ENCODE measurements at regions of chr2 and their contacts with region 1.

Region 1: DNA sequence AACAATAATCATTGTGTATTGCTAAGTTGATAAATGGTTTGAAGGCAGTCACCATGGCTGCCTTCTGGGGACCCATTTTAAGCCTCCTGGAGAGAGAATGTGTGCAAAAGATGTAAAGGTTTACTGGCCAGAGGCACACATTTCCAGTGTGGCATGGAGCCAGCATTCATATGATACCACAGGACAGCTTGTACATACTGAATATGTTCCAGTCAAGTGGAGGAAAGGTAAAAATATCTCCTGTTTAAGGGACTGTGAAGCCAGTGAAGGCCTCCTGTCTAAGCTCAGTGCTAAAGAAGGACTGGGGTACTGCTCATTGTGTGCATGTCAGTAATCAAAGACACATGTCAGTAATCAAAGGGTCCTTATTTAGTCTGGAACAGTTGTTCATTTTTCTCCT is 119.2 kb downstream of the BABAM2 start:
- DNase-seq: no peak
- H3K4me3 ChIP-seq: no peak overlapping the region
- H3K27ac ChIP-seq: no peak overlapping the region
- H3K4me1 ChIP-seq: no peaks in the 10 kb centered on the region
- H3K27me3 ChIP-seq: no peaks in the 10 kb centered on the region
- CTCF ChIP-seq: no peak
- POLR2A ChIP-seq: no peak

Region 2: DNA sequence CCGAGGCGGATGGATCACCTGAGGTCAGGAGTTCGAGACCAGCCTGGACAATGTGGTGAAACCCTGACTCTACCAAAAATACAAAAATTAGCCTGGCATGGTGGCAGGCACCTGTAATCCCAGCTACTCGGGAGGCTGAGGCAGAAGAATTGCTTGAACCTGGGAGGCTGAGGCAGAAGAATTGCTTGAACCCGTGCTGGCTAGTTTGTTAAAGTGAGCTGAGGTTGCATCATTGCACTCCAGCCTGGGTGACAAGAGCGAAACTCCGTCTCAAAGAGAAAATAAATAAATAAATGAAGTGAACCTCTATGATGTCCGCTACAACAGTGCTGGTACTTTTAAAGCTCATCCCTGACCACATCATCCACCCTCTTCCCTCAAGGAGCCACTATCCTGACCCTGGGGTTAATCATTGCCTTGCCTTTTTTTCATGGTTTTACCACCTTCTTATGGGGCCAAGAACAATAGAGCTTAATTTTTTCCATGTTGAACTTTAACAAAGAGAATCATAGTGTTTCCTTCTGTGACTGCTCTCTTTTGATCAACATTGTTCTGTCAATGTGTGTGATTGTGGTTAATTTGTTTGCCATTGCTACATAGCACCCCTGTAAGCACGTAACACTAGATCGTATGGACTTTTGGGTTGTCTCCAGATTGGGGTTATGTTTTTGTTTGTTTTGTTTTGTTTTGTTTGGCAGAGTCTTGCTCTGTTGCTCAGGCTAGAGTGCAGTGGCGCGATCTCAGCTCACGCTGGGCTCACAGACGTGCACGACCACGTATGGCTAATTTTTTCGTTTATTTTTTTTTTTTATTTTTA is 815.0 kb before region 1 on chr2:
- intact Hi-C with region 1: no loop called
- DNase-seq: no peak
- H3K4me3 ChIP-seq: no peak overlapping the region
- H3K27ac ChIP-seq: no peak overlapping the region
- H3K4me1 ChIP-seq: no peaks in the 10 kb centered on the region
- H3K27me3 ChIP-seq: no peaks in the 10 kb centered on the region
- CTCF ChIP-seq: no peak
- POLR2A ChIP-seq: no peak

Region 3: DNA sequence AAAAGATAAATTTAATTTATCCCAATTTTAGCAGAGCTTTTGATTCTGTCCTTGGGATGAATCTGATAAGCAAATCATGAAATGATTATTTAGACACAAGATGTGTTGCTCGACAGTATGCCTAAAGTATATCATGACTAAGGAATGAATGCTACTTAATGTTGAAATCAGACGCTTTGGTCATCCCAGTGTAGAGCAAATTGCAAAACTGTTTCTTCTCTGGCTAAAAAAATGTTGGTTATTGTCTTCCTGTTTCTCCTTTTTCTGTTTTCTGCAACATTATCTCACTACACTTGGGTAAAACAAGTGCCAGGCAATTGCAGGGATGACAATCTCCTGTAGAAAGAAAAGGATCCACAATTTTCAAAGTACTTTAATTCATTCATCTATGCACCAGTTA is 52.8 kb before region 1 on chr2:
- intact Hi-C with region 1: loop called (anchors 2 kb)
- DNase-seq: no peak
- H3K4me3 ChIP-seq: no peak overlapping the region
- H3K27ac ChIP-seq: no peak overlapping the region
- H3K4me1 ChIP-seq: peaks cover 7 to 29% of the 10 kb centered on the region in 2 donors
- H3K27me3 ChIP-seq: no peaks in the 10 kb centered on the region
- CTCF ChIP-seq: no peak
- POLR2A ChIP-seq: no peak

Region 4: GRCh38 chr2:27967076-27967475 is 42.7 kb before region 1 on chr2:
- intact Hi-C with region 1: no loop called
- DNase-seq: no peak
- H3K4me3 ChIP-seq: no peak overlapping the region
- H3K27ac ChIP-seq: no peak overlapping the region
- H3K4me1 ChIP-seq: no peaks in the 10 kb centered on the region
- H3K27me3 ChIP-seq: no peaks in the 10 kb centered on the region
- CTCF ChIP-seq: no peak
- POLR2A ChIP-seq: no peak

Region 5: GRCh38 chr2:28181801-28182200 is 172.1 kb after region 1 on chr2:
- intact Hi-C with region 1: loop called (anchors 5 kb)
- DNase-seq: no peak
- H3K4me3 ChIP-seq: no peak overlapping the region
- H3K27ac ChIP-seq: no peak overlapping the region
- H3K4me1 ChIP-seq: no peaks in the 10 kb centered on the region
- H3K27me3 ChIP-seq: no peaks in the 10 kb centered on the region
- CTCF ChIP-seq: no peak
- POLR2A ChIP-seq: no peak